A549 (cell line): ENCODE measurements at regions of chr17 and their contacts with region 1.

Region 1: DNA sequence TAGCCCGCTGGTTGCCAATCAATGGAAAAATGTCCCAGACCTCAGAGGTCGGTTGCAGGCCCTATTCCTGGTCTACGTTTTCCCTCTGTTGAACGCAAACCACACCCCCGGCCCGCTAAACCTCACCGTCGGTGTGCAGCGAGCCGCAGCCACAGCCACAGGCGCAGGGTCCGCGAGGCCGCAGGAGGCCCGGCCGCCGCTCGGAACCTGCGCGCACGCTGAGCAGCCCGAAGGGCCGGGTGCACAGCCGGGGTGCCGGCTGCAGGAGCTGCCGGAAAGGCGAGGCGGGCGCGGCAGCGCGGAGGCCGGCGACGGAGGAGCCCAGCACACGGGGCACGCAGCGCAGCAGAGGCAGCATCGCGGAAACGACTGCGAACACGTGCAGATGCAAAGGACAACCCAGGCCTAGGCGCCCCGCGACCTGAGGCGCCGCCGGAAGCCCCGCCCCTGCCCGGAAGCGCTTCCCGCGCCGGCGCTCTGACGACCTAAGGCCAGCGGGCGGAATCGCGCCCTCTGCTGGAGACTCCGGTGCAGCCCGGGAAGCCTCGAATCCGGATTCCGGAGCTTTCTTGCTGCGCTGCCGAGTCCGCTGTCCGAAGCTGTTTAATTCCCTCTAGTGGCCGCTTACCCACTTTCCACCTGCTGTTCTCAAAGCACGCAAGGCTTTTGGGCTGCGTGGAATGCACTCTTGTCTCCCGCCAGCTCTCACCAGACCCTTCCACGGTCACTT is at the start of gene C1QBP:
- DNase-seq: peak; percentile 96 to 97
- ATAC-seq: peak; percentile 93 to 94
- H3K4me3 ChIP-seq: peak within 1 kb of the TSS; percentile 77
- H3K27ac ChIP-seq: peak within 1 kb of the TSS; percentile 92 to 97
- H3K4me1 ChIP-seq: peaks cover 29% of the 10 kb centered on the region
- CTCF ChIP-seq: peak; percentile 99
- EP300 ChIP-seq: no peak
- POLR2A ChIP-seq: peak; percentile 93
- RAD21 ChIP-seq: peak; percentile 74 to 81
- polyA plus RNA-seq, gene C1QBP: 448 and 683 TPM in 2 replicates

Region 2: DNA sequence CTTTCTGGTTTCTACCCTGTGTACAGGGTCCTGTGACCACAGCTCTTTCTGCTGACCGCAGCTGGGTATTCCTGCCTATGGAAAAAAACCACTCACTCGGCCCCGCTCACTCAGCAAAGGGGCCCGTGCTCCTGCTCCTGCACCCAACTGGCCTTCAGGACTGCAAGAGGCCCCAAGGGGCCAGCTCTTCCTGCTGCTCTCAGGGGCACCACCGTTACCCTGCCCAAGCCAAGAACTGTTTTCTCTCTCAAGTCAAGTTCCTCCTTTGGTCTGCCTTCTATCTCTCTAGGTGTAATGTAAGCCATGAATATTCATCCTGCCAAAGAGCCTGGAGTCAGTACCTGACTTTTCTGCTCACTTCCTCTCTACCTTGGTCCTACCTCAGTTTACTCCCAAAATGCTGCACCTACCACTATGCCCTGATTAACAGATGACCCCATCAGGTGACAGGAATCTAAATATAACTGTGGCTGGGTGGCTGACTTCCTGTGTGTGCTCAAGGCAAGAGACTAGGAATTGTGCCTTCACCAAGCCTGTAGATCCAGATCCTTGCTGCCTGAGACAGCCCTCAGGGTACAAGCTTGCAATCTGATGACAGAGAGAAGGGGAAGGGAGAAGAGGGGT is 183.9 kb before region 1 on chr17:
- CTCF ChIA-PET with region 1: interaction called, 20 read pairs
- POLR2A ChIA-PET with region 1: no interaction called
- DNase-seq: no peak
- ATAC-seq: peak in 1 of 2 experiments; percentile 30; a peak in 1 of 6 replicates
- H3K4me3 ChIP-seq: no peak overlapping the region
- H3K27ac ChIP-seq: no peak overlapping the region
- H3K4me1 ChIP-seq: no peaks in the 10 kb centered on the region
- CTCF ChIP-seq: no peak
- EP300 ChIP-seq: no peak
- POLR2A ChIP-seq: no peak
- RAD21 ChIP-seq: no peak

Region 3: GRCh38 chr17:5405400-5405799 is 33.5 kb before region 1 on chr17:
- CTCF ChIA-PET with region 1: interaction called, 23 read pairs
- POLR2A ChIA-PET with region 1: no interaction called
- DNase-seq: no peak
- ATAC-seq: no peak
- H3K4me3 ChIP-seq: no peak overlapping the region
- H3K27ac ChIP-seq: no peak overlapping the region
- H3K4me1 ChIP-seq: no peaks in the 10 kb centered on the region
- CTCF ChIP-seq: no peak
- EP300 ChIP-seq: no peak
- POLR2A ChIP-seq: no peak
- RAD21 ChIP-seq: no peak

Region 4: DNA sequence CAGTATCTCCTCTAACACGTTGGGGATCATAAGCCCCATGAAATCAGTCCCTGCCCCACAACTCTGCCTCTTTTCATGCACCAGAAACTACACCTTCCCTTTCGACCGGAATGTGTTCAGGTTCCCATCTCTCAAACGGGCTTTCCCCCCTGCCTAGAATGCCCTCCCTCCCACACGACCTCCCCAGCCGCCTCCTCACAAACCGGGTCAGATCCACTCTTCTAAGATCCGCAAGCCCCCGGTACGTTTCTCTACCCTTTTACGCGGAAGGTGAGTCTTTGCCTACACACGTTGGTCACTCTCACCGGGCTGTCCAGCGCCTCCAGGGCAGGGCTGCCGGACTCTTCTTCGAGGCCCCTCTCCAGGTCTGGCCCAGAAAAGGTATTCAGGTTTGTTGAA is 29.2 kb after region 1 on chr17:
- CTCF ChIA-PET with region 1: interaction called, 86 read pairs
- POLR2A ChIA-PET with region 1: interaction called, 8 read pairs
- DNase-seq: peak in 1 of 2 experiments; percentile 34
- ATAC-seq: peak; percentile 22 to 50
- H3K4me3 ChIP-seq: peak overlapping the region; percentile 91
- H3K27ac ChIP-seq: peak overlapping the region; percentile 85 to 95
- H3K4me1 ChIP-seq: peaks cover 9% of the 10 kb centered on the region; the same call in 2 of the 3 replicates
- CTCF ChIP-seq: no peak
- EP300 ChIP-seq: no peak
- POLR2A ChIP-seq: no peak
- RAD21 ChIP-seq: no peak

Region 5: DNA sequence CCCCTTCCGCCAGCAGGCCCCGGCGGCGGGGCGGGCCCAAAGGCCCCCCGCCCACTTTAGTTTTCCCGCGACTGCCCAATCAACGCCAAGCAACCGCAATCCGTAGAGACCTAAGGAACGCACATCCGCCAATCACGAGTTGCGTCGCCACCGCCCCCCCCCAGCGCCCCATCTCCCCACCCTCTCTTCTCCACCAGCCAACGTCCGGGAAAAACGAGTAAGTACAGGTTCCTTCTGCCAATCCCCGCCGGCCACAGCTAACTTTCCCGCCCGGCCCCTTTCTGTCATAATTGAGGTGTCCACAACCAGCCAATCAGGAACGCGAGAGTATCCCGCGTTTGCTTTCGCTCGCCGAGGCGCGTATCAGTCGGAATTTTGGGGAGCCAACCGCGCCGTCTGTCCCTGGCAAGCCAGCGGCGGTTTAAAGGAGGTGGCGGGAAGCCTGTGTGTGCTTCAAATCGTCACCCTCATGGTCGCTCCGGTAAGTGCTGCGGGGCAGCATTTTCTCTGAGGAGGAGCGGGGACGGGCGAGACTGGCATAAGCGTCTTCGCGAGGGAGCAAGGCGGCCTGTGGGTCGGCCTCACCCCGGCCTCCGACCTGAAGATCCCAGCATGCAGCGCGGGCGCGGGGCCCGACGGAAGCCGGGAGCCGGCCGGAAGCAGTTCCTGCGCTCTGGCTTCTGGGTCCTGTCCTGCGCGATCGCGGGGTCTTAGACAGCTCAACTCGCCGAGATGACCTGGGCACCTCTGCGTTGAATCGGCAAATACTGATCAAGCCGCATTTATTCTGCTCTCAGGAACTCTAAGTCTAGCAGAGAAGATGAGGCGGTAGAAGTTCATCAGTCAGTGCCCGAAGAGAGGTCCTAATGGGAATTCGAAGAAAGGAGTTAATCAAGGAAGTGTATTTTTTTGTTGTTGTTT is 47.6 kb after region 1 on chr17 and contains the start of gene MIS12:
- CTCF ChIA-PET with region 1: interaction called, 43 read pairs
- POLR2A ChIA-PET with region 1: interaction called, 6 read pairs
- DNase-seq: peak; percentile 100
- ATAC-seq: peak; percentile 97
- H3K4me3 ChIP-seq: peak within 1 kb of the TSS; percentile 93
- H3K27ac ChIP-seq: peak within 1 kb of the TSS; percentile 93 to 95
- H3K4me1 ChIP-seq: peaks cover 11% of the 10 kb centered on the region; the same call in 2 of the 3 replicates
- CTCF ChIP-seq: no peak
- EP300 ChIP-seq: no peak
- POLR2A ChIP-seq: peak; percentile 73
- RAD21 ChIP-seq: no peak
- polyA plus RNA-seq, gene MIS12: 36.6 and 38.2 TPM in 2 replicates